MCF 10A (cell line): ENCODE measurements at regions of chr6 and their contacts with region 1.

Region 1: DNA sequence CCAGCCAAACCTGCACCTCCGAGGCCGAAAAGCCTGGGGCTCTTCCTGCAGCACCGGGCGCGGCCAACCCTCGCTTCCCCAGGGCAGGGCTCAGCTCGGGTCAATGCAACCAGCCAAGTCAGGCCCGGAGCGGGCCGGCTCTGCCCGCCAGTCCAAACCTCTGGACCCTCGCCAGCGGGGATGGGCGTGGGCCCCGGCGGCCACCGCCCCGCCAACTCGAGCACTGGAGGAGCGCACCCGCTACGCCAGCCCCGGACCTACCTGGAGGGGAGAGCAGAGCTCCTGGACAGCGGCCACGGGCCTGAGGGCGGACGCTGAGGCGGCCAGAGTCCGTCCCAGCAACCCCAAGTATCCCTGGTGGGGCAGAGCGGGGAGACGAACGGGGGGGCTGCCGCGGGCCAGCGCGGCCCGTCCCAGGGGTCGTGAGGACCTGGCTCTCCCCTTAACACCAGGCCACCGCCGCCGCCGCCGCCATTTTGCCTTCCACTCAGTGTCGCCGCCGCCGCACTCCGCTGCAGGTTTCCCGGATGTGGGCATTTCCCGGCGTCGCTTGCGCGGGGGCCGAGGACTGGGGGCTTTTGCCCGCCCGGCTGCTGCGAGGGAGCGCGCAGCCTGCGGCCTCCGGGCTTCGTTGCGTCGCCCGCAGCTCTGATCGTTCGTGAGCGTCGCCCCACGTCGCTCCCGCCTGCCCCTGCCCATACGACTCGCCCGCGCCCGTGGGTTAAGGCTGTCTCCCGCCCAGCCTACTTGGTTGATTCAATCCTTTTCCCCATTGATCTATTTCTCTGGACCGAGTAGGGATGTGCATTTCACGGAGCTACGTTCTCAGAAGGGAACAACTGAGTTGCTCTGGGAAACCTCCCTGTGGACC is at the start of gene LATS1:
- DNase-seq: peak; percentile 93
- H3K4me3 Mint-ChIP-seq: peak within 1 kb of the TSS; percentile 83
- H3K27ac Mint-ChIP-seq: peak within 1 kb of the TSS; percentile 82
- H3K4me1 Mint-ChIP-seq: no peaks in the 10 kb centered on the region
- H3K27me3 Mint-ChIP-seq: no peaks in the 10 kb centered on the region
- CTCF ChIP-seq: no peak
- total RNA-seq, gene LATS1: 28.8 and 34.3 TPM in 2 replicates

Region 2: GRCh38 chr6:149112976-149113375 is 604.8 kb before region 1 on chr6:
- CTCF ChIA-PET with region 1: no interaction called
- POLR2A ChIA-PET with region 1: no interaction called
- intact Hi-C with region 1: no loop called
- DNase-seq: no peak
- H3K4me3 Mint-ChIP-seq: no peak overlapping the region
- H3K27ac Mint-ChIP-seq: no peak overlapping the region
- H3K4me1 Mint-ChIP-seq: no peaks in the 10 kb centered on the region
- H3K27me3 Mint-ChIP-seq: peaks cover 20% of the 10 kb centered on the region
- CTCF ChIP-seq: no peak

Region 3: GRCh38 chr6:149545754-149546528 is 171.9 kb before region 1 on chr6 and contains the start of gene PPIL4:
- CTCF ChIA-PET with region 1: interaction called, 4 read pairs
- POLR2A ChIA-PET with region 1: interaction called, 24 read pairs
- intact Hi-C with region 1: no loop called
- DNase-seq: peak; percentile 92
- H3K4me3 Mint-ChIP-seq: peak within 1 kb of the TSS; percentile 92
- H3K27ac Mint-ChIP-seq: peak within 1 kb of the TSS; percentile 90
- H3K4me1 Mint-ChIP-seq: peaks cover 34% of the 10 kb centered on the region
- H3K27me3 Mint-ChIP-seq: no peaks in the 10 kb centered on the region
- CTCF ChIP-seq: peak; percentile 88
- total RNA-seq, gene PPIL4: 37.2 and 47.7 TPM in 2 replicates

Region 4: GRCh38 chr6:149642829-149643580 is 74.8 kb before region 1 on chr6:
- CTCF ChIA-PET with region 1: no interaction called
- POLR2A ChIA-PET with region 1: interaction called, 72 read pairs
- intact Hi-C with region 1: loop called (anchors 1 kb)
- DNase-seq: no peak
- H3K4me3 Mint-ChIP-seq: no peak overlapping the region
- H3K27ac Mint-ChIP-seq: no peak overlapping the region
- H3K4me1 Mint-ChIP-seq: peaks cover 16% of the 10 kb centered on the region
- H3K27me3 Mint-ChIP-seq: no peaks in the 10 kb centered on the region
- CTCF ChIP-seq: no peak

Region 5: DNA sequence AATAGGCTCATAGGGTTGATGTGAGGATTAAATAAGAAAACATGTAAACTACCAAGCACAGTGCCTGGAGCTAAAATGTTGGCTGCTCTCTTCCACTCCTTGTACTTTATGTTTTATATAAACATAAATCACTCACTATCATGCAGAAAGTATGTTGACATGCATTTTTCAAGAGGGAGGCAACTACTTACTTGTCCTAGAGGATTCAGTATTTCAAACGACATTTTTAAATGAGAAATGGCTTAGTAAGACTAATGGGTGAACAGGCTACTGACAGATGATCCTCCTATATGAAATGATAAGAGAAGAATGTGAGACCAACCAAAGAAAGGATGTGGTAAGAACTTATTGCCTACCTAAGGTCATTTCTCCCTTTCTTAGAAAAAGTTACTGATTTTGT is 20.9 kb before region 1 on chr6:
- CTCF ChIA-PET with region 1: interaction called, 3 read pairs
- POLR2A ChIA-PET with region 1: interaction called, 96 read pairs
- intact Hi-C with region 1: no loop called
- DNase-seq: peak; percentile 21
- H3K4me3 Mint-ChIP-seq: no peak overlapping the region
- H3K27ac Mint-ChIP-seq: peak overlapping the region; percentile 87
- H3K4me1 Mint-ChIP-seq: peaks cover 14% of the 10 kb centered on the region
- H3K27me3 Mint-ChIP-seq: no peaks in the 10 kb centered on the region
- CTCF ChIP-seq: no peak

Region 6: DNA sequence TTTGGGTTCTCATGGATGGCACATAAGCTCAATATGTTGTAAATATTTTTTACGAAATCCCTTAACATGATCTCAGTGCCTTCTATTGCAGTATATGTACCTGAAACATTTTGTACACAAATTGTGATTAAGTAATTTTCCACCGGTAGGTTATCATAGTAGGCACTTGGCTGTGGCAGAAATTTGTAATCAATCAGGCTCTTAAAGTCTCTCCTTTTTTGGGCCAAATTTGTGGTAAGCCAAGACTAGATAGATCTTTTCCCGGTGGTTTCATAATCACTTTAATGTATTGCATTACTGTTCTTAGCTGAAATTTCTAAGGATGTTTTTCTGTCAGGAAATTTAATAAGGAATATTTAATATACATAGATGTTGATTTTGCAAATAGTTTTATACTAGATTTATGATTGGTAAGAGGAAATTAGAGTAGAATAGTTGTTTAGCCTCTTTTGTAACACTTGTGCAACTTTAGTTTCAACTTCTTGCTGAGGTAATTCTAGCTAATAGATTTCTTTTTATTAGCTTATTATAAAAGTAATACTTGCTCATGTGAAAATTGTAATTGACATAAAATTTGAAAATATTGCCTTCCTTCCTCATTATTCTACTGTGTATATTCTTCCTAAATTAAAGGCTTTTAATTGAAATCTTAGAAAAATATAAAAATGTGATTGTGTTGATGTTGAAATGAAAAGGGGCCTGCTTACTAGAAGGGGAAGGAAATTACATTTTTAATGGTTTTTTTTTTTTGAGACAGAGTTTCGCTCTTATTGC is 35.0 kb after region 1 on chr6:
- CTCF ChIA-PET with region 1: interaction called, 8 read pairs
- POLR2A ChIA-PET with region 1: interaction called, 138 read pairs
- intact Hi-C with region 1: no loop called
- DNase-seq: peak; percentile 30
- H3K4me3 Mint-ChIP-seq: peak overlapping the region; percentile 10
- H3K27ac Mint-ChIP-seq: peak overlapping the region; percentile 27
- H3K4me1 Mint-ChIP-seq: peaks cover 7% of the 10 kb centered on the region
- H3K27me3 Mint-ChIP-seq: no peaks in the 10 kb centered on the region
- CTCF ChIP-seq: no peak

Region 7: DNA sequence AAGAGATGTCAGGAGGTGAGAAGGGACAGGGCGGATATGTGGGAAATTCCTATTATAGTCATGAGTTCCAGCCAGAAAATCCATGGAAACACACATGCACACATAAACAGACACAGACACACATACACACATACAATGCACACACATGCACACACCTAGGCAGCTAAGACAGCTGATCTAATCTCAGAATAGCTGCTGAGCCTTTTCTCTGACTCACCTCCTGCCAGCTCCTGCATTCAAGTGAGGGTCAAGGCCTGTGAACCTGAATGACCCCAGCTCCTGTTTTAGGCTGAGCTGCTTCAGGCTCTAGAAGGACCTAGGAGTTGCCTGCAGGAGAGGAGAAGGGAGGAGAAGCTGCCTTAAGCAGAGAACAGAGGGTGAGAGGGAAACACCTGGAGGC is 329.1 kb after region 1 on chr6:
- CTCF ChIA-PET with region 1: no interaction called
- POLR2A ChIA-PET with region 1: no interaction called
- intact Hi-C with region 1: no loop called
- DNase-seq: no peak
- H3K4me3 Mint-ChIP-seq: no peak overlapping the region
- H3K27ac Mint-ChIP-seq: no peak overlapping the region
- H3K4me1 Mint-ChIP-seq: no peaks in the 10 kb centered on the region
- H3K27me3 Mint-ChIP-seq: peaks cover 29% of the 10 kb centered on the region
- CTCF ChIP-seq: no peak